GM12878 (cell line): ENCODE measurements at regions of chr17 and their contacts with region 1.

Region 1: DNA sequence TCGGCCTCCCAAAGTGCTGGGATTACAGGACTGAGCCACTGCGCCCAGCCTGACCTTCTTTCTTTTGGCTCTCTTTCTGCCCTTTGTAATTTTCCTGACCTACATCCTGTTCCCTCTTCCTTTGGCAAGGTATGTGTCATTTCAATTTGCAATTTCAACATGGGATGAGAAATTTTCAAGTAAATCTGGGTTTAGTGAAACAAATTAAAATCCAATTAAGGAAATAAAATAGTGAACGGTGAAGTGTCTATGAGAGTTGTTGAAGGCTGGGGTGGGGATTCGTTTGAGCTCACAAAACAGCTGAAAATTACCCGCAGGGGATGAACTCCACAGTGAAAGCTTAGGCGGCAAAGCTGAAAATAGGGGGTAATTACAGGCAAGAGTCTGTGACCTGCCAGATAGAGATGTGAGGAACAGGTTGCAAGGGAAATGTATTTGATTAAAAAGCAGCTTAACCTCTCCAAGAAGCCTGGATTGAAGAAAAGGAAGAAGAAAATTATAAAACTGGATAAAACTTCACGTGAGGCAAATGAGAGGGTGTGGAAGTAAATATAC is 277.7 kb downstream of the UTP18 start:
- DNase-seq: no peak
- ATAC-seq: no peak
- H3K4me3 ChIP-seq: no peak overlapping the region
- H3K27ac ChIP-seq: no peak overlapping the region
- H3K4me1 ChIP-seq: no peaks in the 10 kb centered on the region
- H3K27me3 ChIP-seq: no peaks in the 10 kb centered on the region
- CTCF ChIP-seq: no peak
- EP300 ChIP-seq: no peak
- POLR2A ChIP-seq: no peak
- RAD21 ChIP-seq: no peak

Region 2: GRCh38 chr17:51189628-51190027 is 348.4 kb before region 1 on chr17:
- CTCF ChIA-PET with region 1: no interaction called
- POLR2A ChIA-PET with region 1: no interaction called
- RAD21 ChIA-PET with region 1: no interaction called
- SMC1A ChIA-PET with region 1: no interaction called
- in situ Hi-C with region 1: loop called (anchors 10 kb)
- intact Hi-C with region 1: no loop called
- DNase-seq: no peak
- ATAC-seq: no peak
- H3K4me3 ChIP-seq: no peak overlapping the region
- H3K27ac ChIP-seq: no peak overlapping the region
- H3K4me1 ChIP-seq: no peaks in the 10 kb centered on the region
- H3K27me3 ChIP-seq: no peaks in the 10 kb centered on the region
- CTCF ChIP-seq: no peak
- EP300 ChIP-seq: no peak
- POLR2A ChIP-seq: no peak
- RAD21 ChIP-seq: no peak

Region 3: DNA sequence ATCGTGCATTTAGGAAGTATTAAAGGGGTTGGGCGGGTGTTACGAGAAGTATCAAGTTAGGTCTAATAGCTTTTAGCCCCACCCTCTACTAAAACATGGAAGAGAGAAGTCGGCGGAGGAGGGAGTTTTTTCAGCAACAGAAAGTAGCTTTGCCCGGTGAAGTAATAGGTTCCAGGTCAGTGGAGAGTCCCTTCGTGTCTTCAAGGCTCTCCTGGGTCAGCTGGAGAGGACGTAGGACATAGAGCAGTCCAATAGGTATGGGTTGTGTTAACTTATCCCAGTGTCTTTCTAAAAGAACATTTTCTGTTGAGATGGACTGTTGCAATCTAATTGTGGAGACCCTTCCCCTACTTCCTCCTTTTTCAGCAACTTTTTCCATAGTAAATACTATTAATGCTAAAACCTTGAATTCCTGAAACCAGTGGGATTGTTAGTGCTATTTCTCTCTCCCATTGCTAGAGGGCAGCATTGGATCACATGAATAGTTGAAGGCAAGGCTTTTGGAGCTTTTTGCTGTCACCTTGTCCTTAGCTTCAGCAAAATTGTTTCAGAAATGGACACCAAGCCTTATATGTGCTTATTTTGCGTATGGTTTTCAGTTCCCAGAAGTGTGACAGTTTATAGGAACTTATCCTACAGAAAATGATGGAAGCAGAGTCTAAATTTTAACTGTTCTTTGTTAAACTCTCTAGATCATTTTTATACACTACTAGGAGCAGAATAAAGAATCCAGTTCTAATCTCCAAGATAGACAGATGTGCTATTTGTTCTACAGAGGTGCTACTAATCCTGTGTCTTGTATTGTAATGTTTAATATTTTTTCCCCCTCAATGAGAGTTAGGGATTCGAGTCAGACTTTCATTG is 239.3 kb before region 1 on chr17:
- CTCF ChIA-PET with region 1: interaction called, 17 read pairs
- POLR2A ChIA-PET with region 1: no interaction called
- RAD21 ChIA-PET with region 1: interaction called, 5 read pairs
- SMC1A ChIA-PET with region 1: interaction called, 3 read pairs
- in situ Hi-C with region 1: no loop called
- intact Hi-C with region 1: loop called (anchors 2 kb)
- DNase-seq: no peak
- ATAC-seq: 0 out of 3 replicates have a peak, but pooled peaks have one; percentile 38
- H3K4me3 ChIP-seq: no peak overlapping the region
- H3K27ac ChIP-seq: no peak overlapping the region
- H3K4me1 ChIP-seq: no peaks in the 10 kb centered on the region
- H3K27me3 ChIP-seq: no peaks in the 10 kb centered on the region
- CTCF ChIP-seq: peak; percentile 62 to 68 (median 63); a peak in 5 of 6 replicates
- EP300 ChIP-seq: no peak
- POLR2A ChIP-seq: no peak
- RAD21 ChIP-seq: peak; percentile 63

Region 4: DNA sequence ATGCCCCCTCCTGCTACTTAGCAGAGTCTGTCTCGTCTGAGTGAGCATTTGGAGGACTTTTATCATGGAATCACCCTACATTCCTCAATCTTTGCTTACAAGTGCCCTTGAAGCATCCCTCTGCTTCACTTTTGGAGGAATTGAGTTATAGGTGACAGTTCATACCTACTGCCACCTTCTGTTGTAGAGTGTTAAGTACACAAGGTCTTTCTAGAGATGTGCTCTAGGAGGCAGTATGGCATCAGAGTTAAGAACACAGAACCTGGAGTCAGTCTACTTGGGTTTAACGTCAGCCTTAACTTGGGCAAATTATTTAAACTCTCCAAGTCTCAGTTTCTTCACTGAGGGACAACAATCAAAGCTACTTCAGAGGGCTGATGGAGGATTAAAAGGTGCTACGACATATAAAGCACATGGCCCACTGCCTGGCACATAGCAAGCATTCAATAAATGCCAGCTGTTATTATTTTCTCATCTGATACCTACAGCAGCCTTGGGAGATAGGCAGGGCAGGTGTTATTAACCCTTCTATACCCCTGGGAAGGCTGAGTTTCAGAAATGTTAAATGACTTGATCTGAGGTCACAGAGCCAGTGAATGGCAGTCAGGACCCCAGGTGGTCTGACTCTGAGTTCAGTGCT is 215.6 kb before region 1 on chr17:
- CTCF ChIA-PET with region 1: no interaction called
- POLR2A ChIA-PET with region 1: no interaction called
- RAD21 ChIA-PET with region 1: no interaction called
- SMC1A ChIA-PET with region 1: no interaction called
- in situ Hi-C with region 1: no loop called
- intact Hi-C with region 1: loop called (anchors 10 kb)
- DNase-seq: no peak
- ATAC-seq: peak; percentile 83
- H3K4me3 ChIP-seq: no peak overlapping the region
- H3K27ac ChIP-seq: no peak overlapping the region
- H3K4me1 ChIP-seq: no peaks in the 10 kb centered on the region
- H3K27me3 ChIP-seq: no peaks in the 10 kb centered on the region
- CTCF ChIP-seq: peak; percentile 67 to 83 (median 71); a peak in 5 of 6 replicates
- EP300 ChIP-seq: no peak
- POLR2A ChIP-seq: no peak
- RAD21 ChIP-seq: peak; percentile 53

Region 5: GRCh38 chr17:51351890-51352289 is 186.2 kb before region 1 on chr17:
- CTCF ChIA-PET with region 1: no interaction called
- POLR2A ChIA-PET with region 1: no interaction called
- RAD21 ChIA-PET with region 1: no interaction called
- SMC1A ChIA-PET with region 1: no interaction called
- in situ Hi-C with region 1: no loop called
- intact Hi-C with region 1: no loop called
- DNase-seq: no peak
- ATAC-seq: no peak
- H3K4me3 ChIP-seq: no peak overlapping the region
- H3K27ac ChIP-seq: no peak overlapping the region
- H3K4me1 ChIP-seq: no peaks in the 10 kb centered on the region
- H3K27me3 ChIP-seq: peaks cover 2 to 3% of the 10 kb centered on the region in 2 experiments; a peak in 2 of 4 replicates
- CTCF ChIP-seq: no peak
- EP300 ChIP-seq: no peak
- POLR2A ChIP-seq: no peak
- RAD21 ChIP-seq: no peak

Region 6: GRCh38 chr17:51371732-51372151 is 166.3 kb before region 1 on chr17:
- CTCF ChIA-PET with region 1: interaction called, 29 read pairs
- POLR2A ChIA-PET with region 1: no interaction called
- RAD21 ChIA-PET with region 1: interaction called, 4 read pairs
- SMC1A ChIA-PET with region 1: interaction called, 11 read pairs
- in situ Hi-C with region 1: no loop called
- intact Hi-C with region 1: loop called (anchors 1 kb)
- DNase-seq: peak; percentile 28
- ATAC-seq: peak; percentile 92
- H3K4me3 ChIP-seq: peak overlapping the region; percentile 63; the same call in 1 of the 2 replicates
- H3K27ac ChIP-seq: 0 out of 2 replicates have a peak overlapping the region, but pooled peaks have one; percentile 50
- H3K4me1 ChIP-seq: peaks cover 3% of the 10 kb centered on the region; the same call in 1 of the 2 replicates
- H3K27me3 ChIP-seq: no peaks in the 10 kb centered on the region
- CTCF ChIP-seq: peak; percentile 50 to 74 (median 62)
- EP300 ChIP-seq: no peak
- POLR2A ChIP-seq: no peak
- RAD21 ChIP-seq: peak; percentile 72

Region 7: DNA sequence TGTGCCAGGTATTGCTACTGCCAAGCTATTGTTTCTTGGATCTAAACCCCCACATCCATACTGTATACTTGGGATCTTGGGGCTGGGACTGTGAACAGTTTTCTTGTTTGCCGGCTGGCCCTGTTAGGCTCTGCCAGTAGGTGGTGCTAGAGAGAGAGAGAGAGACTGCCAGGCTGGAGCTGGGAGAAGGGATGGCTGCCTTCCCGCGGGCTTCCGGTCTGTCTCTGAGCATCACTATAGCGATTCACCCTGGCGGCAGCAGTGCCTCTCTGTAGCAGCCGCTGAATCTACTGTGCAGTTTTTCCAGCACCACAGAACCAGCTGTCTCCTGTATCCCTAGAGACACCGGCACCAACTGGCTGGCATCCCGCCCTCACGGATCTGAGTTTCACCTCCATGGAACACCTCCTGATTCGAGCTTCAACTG is 76.5 kb before region 1 on chr17:
- CTCF ChIA-PET with region 1: interaction called, 9 read pairs
- POLR2A ChIA-PET with region 1: no interaction called
- RAD21 ChIA-PET with region 1: interaction called, 4 read pairs
- SMC1A ChIA-PET with region 1: interaction called, 3 read pairs
- in situ Hi-C with region 1: no loop called
- intact Hi-C with region 1: loop called (anchors 5 kb)
- DNase-seq: no peak
- ATAC-seq: peak; percentile 86
- H3K4me3 ChIP-seq: no peak overlapping the region
- H3K27ac ChIP-seq: no peak overlapping the region
- H3K4me1 ChIP-seq: no peaks in the 10 kb centered on the region
- H3K27me3 ChIP-seq: no peaks in the 10 kb centered on the region
- CTCF ChIP-seq: peak; percentile 70 to 96 (median 87)
- EP300 ChIP-seq: no peak
- POLR2A ChIP-seq: no peak
- RAD21 ChIP-seq: peak; percentile 27; the same call in 1 of the 2 replicates